ENCODE measurements at regions of chr15 and their contacts with region 1.

Region 1: GRCh38 chr15:59313641-59314332 is 58.9 kb downstream of the MYO1E start:
- DNase-seq: peak; percentile 67 to 77
- ATAC-seq: peak; percentile 66 to 81
- H3K4me3 ChIP-seq: no peak overlapping the region
- H3K27ac ChIP-seq: peak overlapping the region; percentile 68 to 85
- H3K4me1 ChIP-seq: peaks cover 97% of the 10 kb centered on the region
- CTCF ChIP-seq: no peak
- EP300 ChIP-seq: no peak
- POLR2A ChIP-seq: no peak
- RAD21 ChIP-seq: 0 out of 5 replicates have a peak, but pooled peaks of 1 of the 2 experiments have one; percentile 13

Region 2: DNA sequence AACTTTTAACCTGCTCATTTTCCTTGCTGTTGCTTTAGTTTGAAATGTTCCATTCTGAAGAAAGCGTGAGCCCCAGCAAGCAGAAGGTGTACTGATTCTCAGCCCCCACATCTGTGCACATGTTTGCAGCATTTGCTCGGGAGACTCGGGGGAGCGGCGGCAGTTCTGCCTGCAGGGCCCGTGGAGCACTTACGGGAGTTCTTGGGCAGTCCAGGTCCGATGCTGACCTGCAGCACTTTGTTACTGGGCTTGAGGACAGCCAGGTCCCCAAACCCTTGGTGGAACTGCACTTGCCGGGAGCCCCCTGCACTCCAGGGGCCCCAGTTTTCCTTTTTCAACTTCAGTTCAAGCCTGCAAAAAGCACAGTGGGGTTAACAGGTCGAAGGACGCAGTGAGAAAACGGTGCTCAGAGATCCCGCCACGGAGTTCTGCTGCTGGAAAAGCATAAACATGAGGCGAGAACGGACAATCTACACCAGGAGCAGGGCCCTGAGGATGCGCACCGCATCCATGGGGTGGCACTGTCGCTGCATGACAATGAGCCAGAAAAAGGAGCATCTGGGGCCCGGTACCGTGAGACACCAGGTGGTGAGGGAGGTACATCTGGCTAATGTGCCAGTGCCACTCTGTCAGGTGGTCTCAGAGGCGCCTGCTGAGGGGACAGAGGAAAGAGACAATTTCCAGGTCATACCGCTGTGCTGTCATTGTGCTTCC is 152.8 kb before region 1 on chr15:
- CTCF ChIA-PET with region 1: no interaction called
- POLR2A ChIA-PET with region 1: no interaction called
- DNase-seq: peak; percentile 41 to 59
- ATAC-seq: peak; percentile 81 to 84
- H3K4me3 ChIP-seq: no peak overlapping the region
- H3K27ac ChIP-seq: peak overlapping the region in 1 of 2 experiments; percentile 22; a peak in 1 of 6 replicates
- H3K4me1 ChIP-seq: peaks cover 6% of the 10 kb centered on the region
- CTCF ChIP-seq: peak; percentile 62
- EP300 ChIP-seq: no peak
- POLR2A ChIP-seq: no peak
- RAD21 ChIP-seq: peak; percentile 76 to 87

Region 3: GRCh38 chr15:59329570-59330350 is 16.0 kb after region 1 on chr15:
- CTCF ChIA-PET with region 1: interaction called, 13 read pairs
- POLR2A ChIA-PET with region 1: interaction called, 3 read pairs
- DNase-seq: peak; percentile 86 to 88
- ATAC-seq: peak; percentile 64 to 79
- H3K4me3 ChIP-seq: peak overlapping the region; percentile 5; the same call in 1 of the 3 replicates
- H3K27ac ChIP-seq: peak overlapping the region; percentile 77 to 85
- H3K4me1 ChIP-seq: peaks cover 99% of the 10 kb centered on the region
- CTCF ChIP-seq: no peak
- EP300 ChIP-seq: peak; percentile 20 to 48; a peak in 1 of 5 replicates
- POLR2A ChIP-seq: no peak
- RAD21 ChIP-seq: peak; percentile 25 to 28; a peak in 1 of 5 replicates

Region 4: GRCh38 chr15:59338414-59338813 is 24.6 kb after region 1 on chr15:
- CTCF ChIA-PET with region 1: interaction called, 11 read pairs
- POLR2A ChIA-PET with region 1: no interaction called
- DNase-seq: no peak
- ATAC-seq: peak in 1 of 2 experiments; percentile 27; a peak in 3 of 6 replicates
- H3K4me3 ChIP-seq: no peak overlapping the region
- H3K27ac ChIP-seq: peak overlapping the region in 1 of 2 experiments; percentile 75; a peak in 3 of 6 replicates
- H3K4me1 ChIP-seq: peaks cover 66% of the 10 kb centered on the region
- CTCF ChIP-seq: no peak
- EP300 ChIP-seq: no peak
- POLR2A ChIP-seq: no peak
- RAD21 ChIP-seq: no peak